Caco-2 (cell line): ENCODE measurements at regions of chr13 and their contacts with region 1.

Region 1: DNA sequence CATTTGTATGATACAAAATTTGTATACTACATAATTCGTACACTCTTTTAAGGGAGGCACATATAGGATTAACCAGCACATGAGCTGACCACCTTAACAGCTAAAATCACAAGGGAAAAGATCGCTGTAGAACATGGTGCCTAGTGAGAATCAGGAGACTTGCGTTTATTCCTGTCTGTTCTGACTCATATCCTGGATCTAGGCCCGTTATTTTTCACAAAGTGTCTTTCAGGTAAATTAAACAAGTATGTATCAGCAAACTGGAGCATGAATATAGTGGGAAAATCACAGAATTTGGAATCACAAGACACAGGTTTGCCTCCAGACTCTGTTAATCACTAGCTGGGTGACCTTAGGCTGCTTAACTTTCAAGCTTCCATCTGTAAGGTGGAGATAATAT is 47.5 kb upstream of the ESD start:
- DNase-seq: no peak
- H3K4me3 ChIP-seq: no peak overlapping the region
- H3K4me3 Mint-ChIP-seq: no peak overlapping the region
- H3K27ac Mint-ChIP-seq: no peak overlapping the region
- H3K4me1 ChIP-seq: no peaks in the 10 kb centered on the region
- H3K4me1 Mint-ChIP-seq: no peaks in the 10 kb centered on the region
- H3K27me3 ChIP-seq: no peaks in the 10 kb centered on the region; the same call in 1 of the 2 replicates
- H3K27me3 Mint-ChIP-seq: peaks cover 27% of the 10 kb centered on the region
- CTCF ChIP-seq: no peak

Region 2: DNA sequence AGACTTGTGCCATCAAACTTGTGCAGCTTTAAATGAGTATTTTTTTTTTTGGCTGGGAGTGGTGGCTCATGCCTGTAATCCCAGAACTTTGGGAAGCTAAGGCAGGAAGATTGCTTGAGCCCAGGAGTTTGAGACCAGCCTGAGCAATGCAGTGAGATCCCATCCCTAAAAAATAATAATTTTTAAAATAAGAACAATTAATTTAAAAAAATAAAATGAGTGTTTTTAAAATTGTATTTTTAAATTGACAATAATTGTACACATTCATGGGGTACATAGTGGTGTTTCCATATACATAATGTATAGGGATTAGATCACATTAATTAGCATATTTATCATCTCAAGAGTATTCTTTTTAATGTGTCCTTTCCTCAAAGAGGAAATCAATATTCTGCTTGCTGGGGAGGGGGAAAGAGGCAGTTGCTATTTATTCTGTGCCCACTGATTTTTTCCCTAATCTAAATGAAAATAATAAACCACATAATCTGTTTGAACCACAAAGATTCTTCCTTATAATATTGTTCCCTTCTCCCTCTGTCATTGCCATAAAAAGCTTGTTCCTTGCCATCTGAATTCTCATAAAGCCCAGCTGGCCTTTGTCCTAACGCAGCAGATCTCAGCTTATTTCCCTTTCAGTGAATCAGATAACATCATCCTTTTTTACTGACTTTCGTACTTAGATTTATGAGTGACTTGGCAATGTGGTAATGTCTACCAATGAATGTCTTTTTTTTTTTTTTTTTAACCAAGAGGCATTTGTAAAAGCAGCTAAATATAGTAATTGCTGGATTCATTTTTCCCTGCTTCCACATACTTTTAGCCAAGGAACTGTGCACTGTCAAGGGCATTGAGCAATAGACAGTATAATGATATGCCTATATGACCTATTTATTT is 375.6 kb before region 1 on chr13:
- CTCF ChIA-PET with region 1: no interaction called
- POLR2A ChIA-PET with region 1: no interaction called
- intact Hi-C with region 1: no loop called
- DNase-seq: no peak
- H3K4me3 ChIP-seq: no peak overlapping the region
- H3K4me3 Mint-ChIP-seq: no peak overlapping the region
- H3K27ac Mint-ChIP-seq: peak overlapping the region; percentile 72
- H3K4me1 ChIP-seq: peaks cover 43% of the 10 kb centered on the region
- H3K4me1 Mint-ChIP-seq: peaks cover 24% of the 10 kb centered on the region
- H3K27me3 ChIP-seq: no peaks in the 10 kb centered on the region
- H3K27me3 Mint-ChIP-seq: no peaks in the 10 kb centered on the region
- CTCF ChIP-seq: no peak

Region 3: GRCh38 chr13:47036291-47037008 is 192.0 kb after region 1 on chr13:
- CTCF ChIA-PET with region 1: no interaction called
- POLR2A ChIA-PET with region 1: no interaction called
- intact Hi-C with region 1: no loop called
- DNase-seq: no peak
- H3K4me3 ChIP-seq: no peak overlapping the region
- H3K4me3 Mint-ChIP-seq: no peak overlapping the region
- H3K27ac Mint-ChIP-seq: no peak overlapping the region
- H3K4me1 ChIP-seq: peaks cover 10% of the 10 kb centered on the region; the same call in 1 of the 2 replicates
- H3K4me1 Mint-ChIP-seq: peaks cover 6% of the 10 kb centered on the region
- H3K27me3 ChIP-seq: no peaks in the 10 kb centered on the region; the same call in 1 of the 2 replicates
- H3K27me3 Mint-ChIP-seq: peaks cover 23% of the 10 kb centered on the region
- CTCF ChIP-seq: no peak

Region 4: GRCh38 chr13:47349211-47349610 is 504.8 kb after region 1 on chr13:
- CTCF ChIA-PET with region 1: no interaction called
- POLR2A ChIA-PET with region 1: no interaction called
- intact Hi-C with region 1: loop called (anchors 10 kb)
- DNase-seq: no peak
- H3K4me3 ChIP-seq: no peak overlapping the region
- H3K4me3 Mint-ChIP-seq: no peak overlapping the region
- H3K27ac Mint-ChIP-seq: no peak overlapping the region
- H3K4me1 ChIP-seq: no peaks in the 10 kb centered on the region
- H3K4me1 Mint-ChIP-seq: no peaks in the 10 kb centered on the region
- H3K27me3 ChIP-seq: no peaks in the 10 kb centered on the region
- H3K27me3 Mint-ChIP-seq: no peaks in the 10 kb centered on the region
- CTCF ChIP-seq: no peak